AG04450 (cell line): ENCODE measurements at regions of chr6 and their contacts with region 1.

Region 1: DNA sequence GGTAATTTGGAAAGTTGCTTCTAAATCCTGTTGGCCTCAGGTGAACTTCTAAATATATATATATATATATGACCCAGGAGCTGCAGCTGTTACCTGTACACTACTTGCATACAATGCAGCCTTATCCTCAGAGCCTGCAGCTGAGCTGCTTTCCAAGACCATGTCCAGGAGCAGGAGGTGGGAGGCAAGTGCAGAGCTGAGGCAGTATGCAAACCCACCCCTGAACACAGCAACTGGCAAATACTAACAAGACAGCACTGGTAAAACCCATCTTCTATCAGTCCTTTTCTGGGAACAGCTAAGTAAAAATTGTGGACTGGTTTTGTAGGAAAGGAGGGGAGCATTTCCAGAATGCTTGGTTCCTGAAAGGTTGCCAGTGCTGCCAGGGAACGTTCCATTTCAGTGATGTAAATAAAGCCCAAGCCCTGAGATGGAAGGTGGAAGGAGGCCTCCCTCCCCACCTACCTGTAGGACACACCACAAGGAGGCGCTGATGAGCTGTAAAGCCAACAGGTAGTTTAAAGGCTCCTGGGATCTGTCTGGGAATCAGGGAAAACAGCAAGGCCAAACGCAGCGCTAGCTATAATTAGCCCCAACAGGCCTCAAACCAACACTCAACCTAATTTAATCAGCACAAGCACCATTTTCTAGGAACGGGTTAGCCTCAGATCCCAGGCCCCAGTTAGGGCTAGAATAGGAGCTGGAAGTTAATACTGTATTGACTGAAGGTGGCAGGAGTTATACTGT is 93.8 kb upstream of the MAP7 start:
- DNase-seq: peak; percentile 54
- H3K4me3 ChIP-seq: no peak overlapping the region
- H3K27ac ChIP-seq: no peak overlapping the region
- H3K27me3 ChIP-seq: no peaks in the 10 kb centered on the region
- CTCF ChIP-seq: peak; percentile 88

Region 2: DNA sequence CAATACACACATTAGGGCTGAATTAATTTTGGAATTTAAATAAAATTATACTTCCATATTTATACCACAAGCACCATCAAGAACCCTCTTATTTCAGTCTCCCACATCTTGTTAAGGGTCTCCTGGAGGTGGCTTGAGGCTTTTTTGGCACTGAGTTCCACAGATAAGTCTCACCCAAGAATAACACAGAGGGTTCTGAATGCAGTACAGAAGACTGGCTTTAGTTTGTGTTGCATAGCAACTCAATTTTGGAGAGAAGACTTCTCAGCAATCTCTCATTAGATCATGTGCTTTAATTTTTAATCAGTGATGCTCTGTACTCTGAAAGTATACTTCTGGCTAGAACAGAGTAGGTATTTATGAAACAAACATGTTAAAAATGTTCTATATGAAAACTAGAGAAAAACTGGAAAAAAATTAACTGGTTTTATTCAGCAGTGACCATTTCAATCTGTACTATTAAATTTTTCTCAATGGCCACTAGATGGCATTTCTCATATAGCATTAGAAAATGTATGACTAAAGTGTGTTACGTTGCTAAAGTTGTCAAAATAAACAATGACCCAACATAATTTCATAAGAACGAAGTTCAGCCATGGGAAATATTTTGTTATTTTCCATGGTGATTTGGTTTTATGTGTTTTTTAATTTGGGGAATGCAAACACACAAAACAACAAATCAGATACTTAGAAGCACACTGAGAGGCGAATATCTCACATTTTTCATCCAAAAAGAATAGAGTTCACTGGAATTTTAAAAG is 61.1 kb before region 1 on chr6:
- CTCF ChIA-PET with region 1: interaction called, 11 read pairs
- POLR2A ChIA-PET with region 1: no interaction called
- DNase-seq: peak; percentile 66
- H3K4me3 ChIP-seq: no peak overlapping the region
- H3K27ac ChIP-seq: peak overlapping the region; percentile 83
- H3K27me3 ChIP-seq: no peaks in the 10 kb centered on the region
- CTCF ChIP-seq: peak; percentile 64

Region 3: DNA sequence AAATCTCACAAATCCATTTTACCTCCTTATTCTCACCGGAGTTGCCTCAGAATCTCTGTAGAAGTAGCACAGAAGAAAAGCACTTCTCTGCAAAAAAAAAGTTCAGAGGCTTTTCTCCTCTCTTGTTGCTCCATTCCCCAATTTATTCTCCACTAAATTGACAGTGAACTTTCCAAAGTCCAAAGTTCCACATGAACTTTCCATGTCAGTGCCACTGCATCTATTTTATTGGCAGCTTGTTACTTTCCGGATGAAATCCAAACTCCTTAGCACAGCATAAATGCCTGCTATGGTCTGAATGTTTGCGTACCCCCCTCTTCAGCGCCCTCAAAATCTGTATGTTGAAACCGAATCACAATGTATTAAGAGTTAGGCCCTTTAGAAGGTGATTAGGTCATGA is 16.8 kb before region 1 on chr6:
- CTCF ChIA-PET with region 1: interaction called, 13 read pairs
- POLR2A ChIA-PET with region 1: no interaction called
- DNase-seq: no peak
- H3K4me3 ChIP-seq: no peak overlapping the region
- H3K27ac ChIP-seq: no peak overlapping the region
- H3K27me3 ChIP-seq: no peaks in the 10 kb centered on the region
- CTCF ChIP-seq: no peak

Region 4: GRCh38 chr6:136657666-136658065 is 13.6 kb after region 1 on chr6:
- CTCF ChIA-PET with region 1: interaction called, 36 read pairs
- POLR2A ChIA-PET with region 1: no interaction called
- DNase-seq: no peak
- H3K4me3 ChIP-seq: no peak overlapping the region
- H3K27ac ChIP-seq: no peak overlapping the region
- H3K27me3 ChIP-seq: no peaks in the 10 kb centered on the region
- CTCF ChIP-seq: no peak

Region 5: GRCh38 chr6:136740050-136740974 is 96.3 kb after region 1 on chr6:
- CTCF ChIA-PET with region 1: interaction called, 10 read pairs
- POLR2A ChIA-PET with region 1: no interaction called
- DNase-seq: peak; percentile 10
- H3K4me3 ChIP-seq: no peak overlapping the region
- H3K27ac ChIP-seq: peak overlapping the region; percentile 62
- H3K27me3 ChIP-seq: no peaks in the 10 kb centered on the region
- CTCF ChIP-seq: no peak

Region 6: DNA sequence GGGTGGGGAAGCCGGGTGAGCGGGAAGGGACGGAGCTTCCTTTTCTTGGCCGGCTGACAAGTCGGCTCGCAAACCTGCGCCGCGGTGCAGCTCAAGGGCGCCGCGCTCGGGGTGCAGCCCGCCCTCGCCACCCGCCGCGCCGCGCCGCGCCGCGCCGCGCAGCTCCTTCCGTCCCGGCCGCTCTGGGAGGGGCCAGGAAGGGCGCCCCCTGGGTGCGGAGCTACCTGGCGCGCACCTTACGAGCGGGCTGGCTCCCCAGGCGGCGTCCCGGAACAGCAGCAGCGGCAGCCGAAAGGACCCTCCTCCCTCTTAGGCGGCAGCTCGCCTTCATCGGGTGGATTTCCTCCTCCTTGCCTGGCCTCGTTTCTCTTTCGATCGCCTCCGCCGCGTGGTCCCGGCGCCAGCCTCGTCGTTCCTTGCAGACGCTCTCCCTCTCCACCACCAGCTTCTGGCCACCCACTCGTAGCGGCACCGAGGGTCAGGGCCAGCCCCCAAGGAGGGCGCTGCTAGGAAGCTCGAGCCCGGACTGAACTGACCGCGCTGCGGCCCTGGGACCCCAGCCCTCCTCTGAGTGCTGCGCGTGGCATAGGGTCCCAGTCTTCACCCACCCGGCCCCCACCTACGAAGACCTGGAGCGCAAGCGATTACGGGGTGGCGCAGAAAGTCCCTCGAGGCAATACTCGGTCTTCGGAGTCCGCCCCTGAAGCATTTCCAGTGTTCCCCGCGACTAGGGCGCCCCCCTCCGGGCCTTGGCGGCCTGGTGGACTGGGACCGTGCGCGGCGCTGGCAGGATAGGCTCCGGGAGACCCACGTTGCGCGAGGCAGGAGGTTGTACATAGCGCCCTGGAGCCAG is 148.6 kb after region 1 on chr6 and contains the start of gene MAP3K5:
- CTCF ChIA-PET with region 1: interaction called, 221 read pairs
- POLR2A ChIA-PET with region 1: interaction called, 22 read pairs
- DNase-seq: peak; percentile 69
- H3K4me3 ChIP-seq: peak within 1 kb of the TSS; percentile 96
- H3K27ac ChIP-seq: peak within 1 kb of the TSS; percentile 92
- H3K27me3 ChIP-seq: no peaks in the 10 kb centered on the region
- CTCF ChIP-seq: peak; percentile 88
- polyA plus RNA-seq, gene MAP3K5: 16.1 and 17.0 TPM in 2 replicates

Region 7: GRCh38 chr6:136822376-136823127 is 178.5 kb after region 1 on chr6 and contains the start of gene PEX7:
- CTCF ChIA-PET with region 1: interaction called, 24 read pairs
- POLR2A ChIA-PET with region 1: interaction called, 3 read pairs
- DNase-seq: peak; percentile 72
- H3K4me3 ChIP-seq: peak within 1 kb of the TSS; percentile 86
- H3K27ac ChIP-seq: peak within 1 kb of the TSS; percentile 60
- H3K27me3 ChIP-seq: peaks cover 3% of the 10 kb centered on the region
- CTCF ChIP-seq: peak; percentile 80
- polyA plus RNA-seq, gene PEX7: 6.7 and 8.9 TPM in 2 replicates

Region 8: GRCh38 chr6:138336221-138336620 is 1692.2 kb after region 1 on chr6:
- CTCF ChIA-PET with region 1: no interaction called
- POLR2A ChIA-PET with region 1: no interaction called
- DNase-seq: no peak
- H3K4me3 ChIP-seq: no peak overlapping the region
- H3K27ac ChIP-seq: no peak overlapping the region
- H3K27me3 ChIP-seq: peaks cover 4% of the 10 kb centered on the region
- CTCF ChIP-seq: no peak